ENCODE measurements at regions of chr19 and their contacts with region 1.

Region 1: DNA sequence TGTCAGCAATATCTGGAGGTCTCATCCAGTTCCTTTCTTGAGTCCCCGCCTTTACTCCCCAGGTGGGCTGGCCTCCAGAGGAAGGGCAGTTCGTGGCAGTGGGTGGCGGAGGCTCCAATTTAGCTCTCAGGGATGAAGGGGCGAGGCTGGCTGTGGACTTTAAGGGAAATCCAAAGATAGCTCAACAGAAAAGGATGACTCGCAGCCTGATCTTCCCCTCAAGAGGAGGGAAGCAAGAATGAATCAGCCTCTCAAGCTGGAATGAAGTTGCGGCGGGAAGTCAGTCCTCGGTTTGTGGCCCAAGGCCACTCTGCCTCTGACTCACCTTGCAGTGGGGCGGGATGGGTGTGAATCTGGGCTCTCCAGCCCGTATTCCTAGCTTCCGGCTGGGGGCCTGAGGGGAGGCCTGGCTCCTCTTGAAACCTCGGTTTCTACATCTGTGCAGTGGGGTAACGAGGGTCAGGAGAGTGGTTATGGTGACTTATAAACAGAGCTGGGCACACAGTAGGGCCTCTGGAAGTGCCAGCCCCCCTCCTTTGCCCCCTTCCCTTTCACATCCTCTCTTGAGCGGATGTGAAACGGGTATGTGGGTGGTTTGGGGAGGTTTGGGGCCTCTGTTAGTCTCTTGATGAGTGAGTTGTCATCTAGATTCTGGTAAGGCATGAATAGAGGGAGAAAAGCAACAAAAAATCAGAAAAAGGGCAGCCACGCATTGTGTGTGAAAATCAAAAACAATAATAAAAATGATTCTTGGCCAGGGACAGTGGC is 10.5 kb upstream of the SMG9 start:
- DNase-seq: peak; percentile 96
- ATAC-seq: peak; percentile 64
- H3K4me3 ChIP-seq: no peak overlapping the region
- H3K27ac ChIP-seq: peak overlapping the region; percentile 92
- H3K4me1 ChIP-seq: peaks cover 48% of the 10 kb centered on the region
- H3K27me3 ChIP-seq: no peaks in the 10 kb centered on the region
- CTCF ChIP-seq: no peak

Region 2: GRCh38 chr19:43738780-43739211 is 26.5 kb before region 1 on chr19:
- CTCF ChIA-PET with region 1: no interaction called
- POLR2A ChIA-PET with region 1: no interaction called
- intact Hi-C with region 1: no loop called
- DNase-seq: no peak
- ATAC-seq: no peak
- H3K4me3 ChIP-seq: no peak overlapping the region
- H3K27ac ChIP-seq: no peak overlapping the region
- H3K4me1 ChIP-seq: peaks cover 18% of the 10 kb centered on the region
- H3K27me3 ChIP-seq: no peaks in the 10 kb centered on the region
- CTCF ChIP-seq: no peak

Region 3: DNA sequence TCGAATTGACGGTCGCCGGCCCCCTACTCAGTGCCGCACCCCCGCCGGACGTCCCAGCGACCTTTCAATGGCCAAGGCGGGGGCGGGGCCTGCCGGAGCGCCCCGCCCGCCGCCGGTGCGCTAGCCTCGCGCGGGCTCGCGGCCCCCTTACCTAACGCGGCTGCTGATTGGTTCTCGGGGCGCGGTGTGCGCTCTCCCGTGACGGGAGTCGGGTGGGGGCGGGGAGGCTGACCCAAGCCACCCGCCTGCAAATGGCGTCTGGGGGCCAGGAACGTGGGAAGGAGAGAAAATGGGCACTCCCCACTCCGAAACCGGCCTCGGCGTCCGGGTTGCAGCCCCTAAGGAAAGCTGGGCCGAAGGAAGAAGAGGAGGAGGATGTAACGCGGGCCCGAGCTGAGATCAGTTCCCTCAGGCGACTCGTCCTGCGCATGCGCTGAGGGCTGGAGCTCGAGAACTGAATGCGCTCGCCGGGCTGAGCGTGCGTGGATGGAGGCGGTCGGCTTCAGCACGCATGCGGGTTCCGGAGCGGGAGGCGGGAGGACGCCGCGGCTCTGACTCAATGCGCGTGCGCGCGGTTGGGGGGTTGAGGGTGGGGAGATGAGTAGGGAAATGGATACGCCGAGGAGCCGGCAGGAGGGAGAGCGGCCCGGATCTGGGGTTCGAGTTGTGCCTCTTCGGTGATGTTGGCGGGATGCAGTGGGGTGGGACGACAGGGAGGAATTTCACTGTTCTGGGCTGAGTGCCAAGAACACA is 10.6 kb before region 1 on chr19 and contains the start of gene SMG9:
- CTCF ChIA-PET with region 1: no interaction called
- POLR2A ChIA-PET with region 1: interaction called, 3 read pairs
- intact Hi-C with region 1: loop called (anchors 1 kb)
- DNase-seq: peak; percentile 95
- ATAC-seq: peak; percentile 64
- H3K4me3 ChIP-seq: peak within 1 kb of the TSS; percentile 96
- H3K27ac ChIP-seq: peak within 1 kb of the TSS; percentile 99
- H3K4me1 ChIP-seq: peaks cover 66% of the 10 kb centered on the region
- H3K27me3 ChIP-seq: no peaks in the 10 kb centered on the region
- CTCF ChIP-seq: no peak
- total RNA-seq, gene SMG9: 48.8 and 49.1 TPM in 2 replicates

Region 4: GRCh38 chr19:43784981-43785808 is 19.9 kb after region 1 on chr19:
- CTCF ChIA-PET with region 1: interaction called, 7 read pairs
- POLR2A ChIA-PET with region 1: interaction called, 4 read pairs
- intact Hi-C with region 1: loop called (anchors 2 kb)
- DNase-seq: peak; percentile 84
- ATAC-seq: peak; percentile 39
- H3K4me3 ChIP-seq: peak overlapping the region; percentile 38; the same call in 1 of the 2 replicates
- H3K27ac ChIP-seq: peak overlapping the region; percentile 98
- H3K4me1 ChIP-seq: peaks cover 35% of the 10 kb centered on the region
- H3K27me3 ChIP-seq: no peaks in the 10 kb centered on the region
- CTCF ChIP-seq: peak; percentile 86

Measured in PC-3 (cell line).